ENCODE measurements at regions of chr7 and their contacts with region 1.

Region 1: DNA sequence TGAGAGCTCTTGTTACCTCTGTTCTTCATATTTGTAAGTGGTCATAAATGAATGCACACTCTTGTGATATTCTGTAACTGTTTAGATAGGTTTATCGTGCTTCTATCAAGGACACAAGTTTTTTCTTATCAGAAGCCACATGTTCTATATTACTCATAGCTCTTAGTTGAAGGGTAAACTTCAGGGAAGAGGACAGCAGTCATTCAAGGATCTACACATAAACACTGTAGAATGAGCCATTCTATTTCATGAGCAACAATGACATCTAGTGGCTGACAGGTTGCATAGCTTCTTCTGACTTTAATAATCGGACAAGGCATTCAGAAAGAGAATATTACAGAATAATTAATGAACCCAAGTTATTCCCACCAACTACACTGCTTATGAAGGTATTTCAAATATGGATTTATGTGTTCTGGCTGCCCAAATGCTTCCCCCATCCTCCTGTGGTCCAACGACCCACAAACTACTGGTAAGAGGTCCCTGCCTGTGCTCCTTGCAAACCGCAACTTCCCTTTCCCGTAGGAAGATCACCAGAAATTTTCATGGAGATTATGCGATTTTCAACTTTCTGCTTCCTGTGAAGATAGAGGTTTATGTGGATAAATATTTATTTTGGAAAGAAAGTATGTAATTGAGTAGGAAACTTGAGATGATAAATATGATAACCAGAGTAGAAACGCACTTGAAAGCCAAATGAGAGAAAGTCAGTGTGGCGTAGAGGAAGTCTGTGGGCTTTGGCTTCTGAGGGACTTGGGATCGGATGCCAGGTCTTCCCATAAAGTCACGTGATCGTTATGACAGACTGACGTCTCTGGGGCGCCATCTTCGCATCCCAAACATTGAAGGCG is 16.8 kb upstream of the ABCB5 start:
- DNase-seq: no peak
- H3K4me3 ChIP-seq: no peak overlapping the region
- CTCF ChIP-seq: peak in 1 of 3 donors; percentile 63
- POLR2A ChIP-seq: no peak

Region 2: GRCh38 chr7:19754521-19755116 is 844.1 kb before region 1 on chr7:
- intact Hi-C with region 1: loop called (anchors 10 kb)
- DNase-seq: no peak
- H3K4me3 ChIP-seq: no peak overlapping the region
- CTCF ChIP-seq: no peak
- POLR2A ChIP-seq: no peak

Region 3: DNA sequence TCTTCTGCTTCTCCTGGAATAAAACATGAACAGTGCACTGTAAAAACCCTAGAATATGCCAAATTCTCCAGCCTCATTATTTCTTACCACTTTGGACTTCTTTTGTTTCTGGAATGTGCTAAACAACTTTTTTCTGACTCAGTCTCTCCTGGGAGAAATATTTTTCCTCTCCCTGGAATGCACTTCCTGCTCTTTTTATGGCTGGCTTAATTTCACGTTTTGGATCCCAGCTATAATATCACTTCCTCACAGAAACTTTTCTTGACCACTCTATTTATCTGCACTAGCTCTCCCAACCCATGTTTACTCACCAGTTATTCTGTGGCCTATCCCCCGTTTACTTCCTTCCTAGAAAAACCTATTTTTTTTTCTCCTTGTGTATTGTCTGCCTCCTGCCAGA is 43.5 kb after region 1 on chr7:
- intact Hi-C with region 1: no loop called
- DNase-seq: no peak
- H3K4me3 ChIP-seq: no peak overlapping the region
- CTCF ChIP-seq: no peak
- POLR2A ChIP-seq: no peak

Region 4: GRCh38 chr7:20786779-20787659 is 188.3 kb after region 1 on chr7 and contains the start of gene SP8:
- intact Hi-C with region 1: no loop called
- DNase-seq: peak in 1 of 2 donors; percentile 31
- H3K4me3 ChIP-seq: peak within 1 kb of the TSS; percentile 13
- CTCF ChIP-seq: no peak
- POLR2A ChIP-seq: no peak
- total RNA-seq, gene SP8: 3.9 to 27.2 (median 8.1) TPM

Measured in lower leg skin (tissue), 4 donors.